H1 (cell line): ENCODE measurements at regions of chr2 and their contacts with region 1.

Region 1: DNA sequence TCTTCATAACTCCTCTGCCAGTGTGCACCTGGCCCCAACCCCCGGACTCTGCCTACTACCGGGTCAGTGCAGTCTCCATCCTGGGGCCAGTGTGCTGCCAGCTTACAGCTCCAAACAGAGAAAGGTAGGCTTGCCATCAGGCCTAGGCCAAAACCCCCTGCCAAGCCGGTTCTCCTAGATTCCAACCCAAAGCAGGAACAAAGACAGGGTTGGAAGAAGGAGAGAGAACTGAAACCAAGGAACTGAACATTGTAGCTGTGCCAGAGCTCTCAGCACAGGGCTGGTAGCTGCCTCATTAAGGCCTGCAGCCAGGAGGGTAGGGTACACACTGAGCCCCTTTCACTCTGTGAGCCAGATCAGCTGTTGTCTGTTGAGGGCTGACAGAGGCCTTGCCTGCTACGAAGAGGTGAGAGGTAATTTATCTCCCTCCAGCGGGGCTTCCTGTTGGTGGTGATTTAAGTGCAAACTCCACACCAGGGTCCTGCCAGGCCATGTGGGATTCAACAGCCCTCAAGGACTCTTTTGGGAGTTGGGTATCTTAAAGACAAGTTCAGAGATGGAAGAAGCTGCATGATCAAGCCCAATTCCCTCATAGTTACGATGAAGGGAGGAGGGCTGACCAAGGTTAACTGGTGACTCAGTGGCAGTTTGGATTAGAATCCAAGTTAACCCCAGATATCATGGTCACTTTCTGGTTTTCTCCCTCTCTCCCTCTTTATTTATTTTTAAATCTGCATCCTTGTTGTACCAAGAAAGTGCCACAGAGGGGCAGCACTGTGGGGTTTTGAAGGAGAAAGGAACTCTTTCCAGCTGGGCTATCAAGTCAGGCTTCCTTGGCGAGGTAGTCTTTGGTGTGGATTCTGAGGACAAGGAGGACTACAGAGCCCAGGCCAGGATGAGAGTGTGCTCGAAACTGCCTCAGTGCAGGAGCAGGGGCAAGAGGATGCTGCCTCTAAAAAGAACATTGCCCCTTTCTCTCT is 48.1 kb downstream of the CYRIA start:
- DNase-seq: peak in 1 of 2 experiments; percentile 66
- H3K4me3 ChIP-seq: no peak overlapping the region
- H3K27ac ChIP-seq: no peak overlapping the region
- H3K4me1 ChIP-seq: peaks cover 0 to 2% (median 0%) of the 10 kb centered on the region in 4 experiments; a peak in 2 of 7 replicates
- H3K27me3 ChIP-seq: no peaks in the 10 kb centered on the region
- CTCF ChIP-seq: peak in 2 of 3 experiments; percentile 64 to 73; a peak in 3 of 4 replicates
- EP300 ChIP-seq: no peak
- POLR2A ChIP-seq: no peak
- RAD21 ChIP-seq: peak; percentile 74 to 81

Region 2: GRCh38 chr2:16546128-16546754 is 71.3 kb before region 1 on chr2:
- CTCF ChIA-PET with region 1: interaction called, 11 read pairs
- POLR2A ChIA-PET with region 1: no interaction called
- DNase-seq: no peak
- H3K4me3 ChIP-seq: no peak overlapping the region
- H3K27ac ChIP-seq: no peak overlapping the region
- H3K4me1 ChIP-seq: no peaks in the 10 kb centered on the region
- H3K27me3 ChIP-seq: no peaks in the 10 kb centered on the region
- CTCF ChIP-seq: no peak
- EP300 ChIP-seq: no peak
- POLR2A ChIP-seq: no peak
- RAD21 ChIP-seq: no peak

Region 3: DNA sequence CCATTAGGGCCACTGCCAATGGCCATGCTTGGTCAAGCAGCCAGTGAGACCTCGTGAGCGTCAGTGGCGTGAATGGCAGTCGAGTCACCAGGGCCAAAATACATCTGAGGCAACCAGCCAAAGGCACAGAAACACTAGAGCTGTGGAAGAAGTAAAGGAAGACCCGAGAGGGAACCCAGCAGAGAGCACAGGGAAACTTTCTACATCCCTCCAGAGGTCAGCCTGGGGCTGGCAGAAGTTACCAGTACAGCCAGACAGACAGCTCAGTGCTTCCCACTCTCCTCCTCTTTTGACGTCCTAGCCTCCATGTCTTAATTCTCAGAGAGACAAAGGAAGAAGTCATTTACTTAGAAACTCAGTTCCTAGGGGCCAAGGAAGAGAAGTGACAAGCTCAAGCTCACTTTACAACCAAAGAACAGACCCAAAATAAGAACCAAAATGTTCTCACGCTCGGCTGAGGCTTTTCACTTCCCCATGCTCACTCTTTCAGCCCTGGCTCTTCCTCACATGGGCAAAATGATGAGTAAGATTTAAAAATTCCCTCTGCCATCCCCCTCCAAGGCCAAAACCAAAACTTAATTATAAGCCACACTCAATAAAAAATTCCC is 39.3 kb after region 1 on chr2:
- CTCF ChIA-PET with region 1: interaction called, 15 read pairs
- POLR2A ChIA-PET with region 1: no interaction called
- DNase-seq: no peak
- H3K4me3 ChIP-seq: no peak overlapping the region
- H3K27ac ChIP-seq: no peak overlapping the region
- H3K4me1 ChIP-seq: peaks cover 0 to 3% (median 0%) of the 10 kb centered on the region in 4 experiments; a peak in 3 of 7 replicates
- H3K27me3 ChIP-seq: no peaks in the 10 kb centered on the region
- CTCF ChIP-seq: no peak
- EP300 ChIP-seq: no peak
- POLR2A ChIP-seq: no peak
- RAD21 ChIP-seq: no peak

Region 4: GRCh38 chr2:16717477-16717876 is 99.9 kb after region 1 on chr2:
- CTCF ChIA-PET with region 1: interaction called, 28 read pairs
- POLR2A ChIA-PET with region 1: no interaction called
- DNase-seq: no peak
- H3K4me3 ChIP-seq: no peak overlapping the region
- H3K27ac ChIP-seq: no peak overlapping the region
- H3K4me1 ChIP-seq: peaks cover 0 to 1% (median 0%) of the 10 kb centered on the region in 4 experiments; a peak in 2 of 7 replicates
- H3K27me3 ChIP-seq: no peaks in the 10 kb centered on the region
- CTCF ChIP-seq: no peak
- EP300 ChIP-seq: no peak
- POLR2A ChIP-seq: no peak
- RAD21 ChIP-seq: no peak

Region 5: DNA sequence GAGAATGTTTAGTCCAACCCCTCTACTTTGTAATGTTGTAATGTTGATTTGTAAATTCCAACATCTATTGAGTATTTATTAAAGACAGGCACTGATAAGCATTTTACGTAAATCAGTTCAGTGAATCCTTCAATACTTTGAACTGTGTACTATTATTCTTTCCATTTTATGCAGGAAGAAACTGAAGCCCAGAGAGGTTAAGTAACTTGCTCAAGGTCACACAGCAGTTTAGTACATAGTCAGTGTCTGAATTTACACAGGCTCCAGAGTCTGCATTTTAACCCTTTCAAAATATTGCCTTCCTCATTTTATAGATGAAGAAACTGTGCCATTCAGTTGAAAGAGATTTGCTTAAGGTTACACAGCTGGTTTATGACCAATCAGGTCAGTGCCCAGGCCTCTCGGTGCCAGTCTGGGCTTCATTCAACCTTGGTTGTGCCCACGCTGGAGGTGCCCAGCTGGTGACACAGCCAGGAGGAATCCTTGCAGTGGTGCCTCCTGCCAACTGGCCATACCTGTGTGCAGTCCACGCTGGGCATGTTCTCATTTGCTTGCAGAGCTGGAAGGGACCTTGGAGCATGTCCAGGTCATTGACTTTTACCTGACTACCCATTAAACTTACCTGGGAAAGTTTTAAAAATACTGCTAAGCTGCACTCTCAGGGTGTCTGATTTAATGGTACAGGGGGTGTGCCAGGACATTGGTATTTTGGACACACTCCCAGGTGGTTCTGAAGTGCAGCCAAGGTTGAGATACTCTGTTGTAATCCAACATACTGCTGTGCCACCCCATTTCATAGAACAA is 122.4 kb after region 1 on chr2:
- CTCF ChIA-PET with region 1: interaction called, 22 read pairs
- POLR2A ChIA-PET with region 1: no interaction called
- DNase-seq: no peak
- H3K4me3 ChIP-seq: no peak overlapping the region
- H3K27ac ChIP-seq: no peak overlapping the region
- H3K4me1 ChIP-seq: no peaks in the 10 kb centered on the region
- H3K27me3 ChIP-seq: no peaks in the 10 kb centered on the region
- CTCF ChIP-seq: no peak
- EP300 ChIP-seq: no peak
- POLR2A ChIP-seq: no peak
- RAD21 ChIP-seq: no peak

Region 6: GRCh38 chr2:16756831-16757644 is 139.5 kb after region 1 on chr2:
- CTCF ChIA-PET with region 1: interaction called, 208 read pairs
- POLR2A ChIA-PET with region 1: interaction called, 4 read pairs
- DNase-seq: peak; percentile 59 to 84
- H3K4me3 ChIP-seq: no peak overlapping the region
- H3K27ac ChIP-seq: no peak overlapping the region
- H3K4me1 ChIP-seq: no peaks in the 10 kb centered on the region
- H3K27me3 ChIP-seq: no peaks in the 10 kb centered on the region
- CTCF ChIP-seq: peak; percentile 78 to 95 (median 88)
- EP300 ChIP-seq: no peak
- POLR2A ChIP-seq: no peak
- RAD21 ChIP-seq: peak; percentile 97 to 99